ENCODE measurements at regions of chr12 and their contacts with region 1.

Region 1: GRCh38 chr12:95574799-95575452 is 23.6 kb upstream of the USP44 start:
- DNase-seq: peak; percentile 4 to 43
- H3K4me3 ChIP-seq: no peak overlapping the region
- H3K27ac ChIP-seq: no peak overlapping the region
- H3K4me1 ChIP-seq: no peaks in the 10 kb centered on the region
- H3K27me3 ChIP-seq: no peaks in the 10 kb centered on the region
- CTCF ChIP-seq: peak; percentile 82

Region 2: GRCh38 chr12:95739561-95740313 is 164.8 kb after region 1 on chr12:
- CTCF ChIA-PET with region 1: interaction called, 13 read pairs
- POLR2A ChIA-PET with region 1: no interaction called
- intact Hi-C with region 1: no loop called
- DNase-seq: no peak
- H3K4me3 ChIP-seq: no peak overlapping the region
- H3K27ac ChIP-seq: no peak overlapping the region
- H3K4me1 ChIP-seq: no peaks in the 10 kb centered on the region
- H3K27me3 ChIP-seq: no peaks in the 10 kb centered on the region
- CTCF ChIP-seq: no peak